CD14-positive monocyte (primary cell): ENCODE measurements at regions of chr6 and their contacts with region 1.

Region 1: GRCh38 chr6:108622641-108623298 is 62.1 kb downstream of the FOXO3 start:
- DNase-seq: peak; percentile 92 to 97 (median 95)
- H3K4me3 ChIP-seq: peak overlapping the region in 2 of 3 experiments; percentile 23 to 50
- H3K4me3 Mint-ChIP-seq: peak overlapping the region; percentile 53 to 85
- H3K27ac ChIP-seq: peak overlapping the region; percentile 74 to 89
- H3K27ac Mint-ChIP-seq: peak overlapping the region; percentile 97 to 100 (median 99)
- H3K4me1 ChIP-seq: peaks cover 42 to 64% of the 10 kb centered on the region in 2 donors
- H3K4me1 Mint-ChIP-seq: peaks cover 71% of the 10 kb centered on the region
- H3K27me3 ChIP-seq: no peaks in the 10 kb centered on the region
- H3K27me3 Mint-ChIP-seq: peaks cover 0 to 4% (median 0%) of the 10 kb centered on the region in 3 donors
- CTCF ChIP-seq: no peak

Region 2: DNA sequence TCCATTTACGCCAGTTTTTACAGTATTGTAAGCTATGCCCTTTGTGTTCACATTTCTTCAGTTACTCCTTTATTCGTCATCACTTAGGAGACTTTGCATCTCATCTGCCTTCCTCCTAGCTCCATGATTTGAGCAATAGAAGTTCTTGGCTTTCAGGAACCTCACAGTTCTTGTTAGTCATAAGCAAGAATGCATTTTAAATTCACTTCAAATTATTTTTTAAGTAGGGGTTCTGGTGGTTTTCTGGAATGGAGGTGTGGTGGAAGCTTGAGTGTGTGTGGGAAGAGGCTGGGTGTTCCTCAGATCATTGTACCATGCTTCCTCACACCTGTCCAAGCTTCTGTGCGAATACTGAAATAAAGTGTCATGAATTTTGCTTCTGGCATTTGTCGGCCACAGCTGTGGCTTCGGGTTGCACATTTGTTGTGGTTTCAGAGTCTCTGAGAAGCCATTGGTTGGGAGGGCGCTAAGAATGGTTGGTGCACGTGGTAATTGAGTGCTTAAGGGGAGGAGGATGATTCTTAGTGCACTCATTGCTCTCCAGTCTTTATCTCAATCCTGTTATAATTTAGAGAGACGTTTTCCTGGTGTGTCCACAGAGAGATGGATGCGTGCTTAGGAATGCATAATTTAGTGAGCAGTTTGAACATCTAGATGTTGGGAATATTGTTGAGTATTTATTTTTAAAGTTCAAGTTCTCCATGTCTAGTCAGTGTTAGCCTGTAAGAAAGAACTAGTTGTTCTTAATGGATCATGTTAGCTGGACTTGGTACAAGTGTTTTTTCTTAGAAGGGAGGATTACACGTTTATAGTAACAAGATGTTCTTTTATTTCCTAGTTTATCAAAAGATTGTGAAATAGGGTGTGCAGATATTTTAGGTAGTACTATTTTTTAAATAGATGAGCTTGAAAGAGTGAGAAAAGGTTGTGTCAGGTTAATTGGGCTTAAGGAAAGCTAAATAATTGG is 30.1 kb before region 1 on chr6:
- intact Hi-C with region 1: loop called in 1 of 2 experiments (anchors 5 kb)
- DNase-seq: peak in 2 of 3 donors; percentile 41 to 68
- H3K4me3 ChIP-seq: no peak overlapping the region
- H3K4me3 Mint-ChIP-seq: peak overlapping the region in 1 of 2 donors; percentile 26
- H3K27ac ChIP-seq: no peak overlapping the region
- H3K27ac Mint-ChIP-seq: peak overlapping the region in 6 of 7 donors; percentile 13 to 82 (median 53)
- H3K4me1 ChIP-seq: peaks cover 64 to 82% of the 10 kb centered on the region in 2 donors
- H3K4me1 Mint-ChIP-seq: peaks cover 86% of the 10 kb centered on the region
- H3K27me3 ChIP-seq: no peaks in the 10 kb centered on the region
- H3K27me3 Mint-ChIP-seq: peaks cover 0 to 2% (median 0%) of the 10 kb centered on the region in 3 donors
- CTCF ChIP-seq: no peak

Region 3: DNA sequence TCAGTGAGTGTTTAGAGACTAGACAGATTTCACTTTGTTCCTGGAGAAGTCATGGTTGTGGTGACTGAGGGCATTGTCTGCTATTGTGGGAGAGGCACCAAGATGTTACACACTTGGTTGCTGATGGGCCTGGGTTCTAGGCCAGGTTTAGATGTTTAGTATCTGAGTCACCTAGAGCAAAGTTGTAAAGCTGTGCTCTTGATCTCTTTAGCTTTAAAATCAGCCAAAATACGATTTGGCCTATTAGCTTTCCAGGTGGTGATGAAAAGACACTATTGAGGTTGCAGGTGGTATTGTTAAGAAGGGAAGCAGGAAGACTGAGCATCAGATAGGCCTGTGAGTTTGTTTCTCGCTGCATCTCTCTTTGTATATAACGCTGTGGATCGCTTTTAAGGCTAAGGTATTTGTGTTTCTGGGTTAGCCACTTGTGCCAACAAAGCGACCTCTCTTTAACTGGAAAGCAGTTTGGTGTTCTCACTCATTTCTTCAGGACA is 13.4 kb before region 1 on chr6:
- intact Hi-C with region 1: no loop called
- DNase-seq: no peak
- H3K4me3 ChIP-seq: no peak overlapping the region
- H3K4me3 Mint-ChIP-seq: no peak overlapping the region
- H3K27ac ChIP-seq: no peak overlapping the region
- H3K27ac Mint-ChIP-seq: no peak overlapping the region
- H3K4me1 ChIP-seq: no peaks in the 10 kb centered on the region
- H3K4me1 Mint-ChIP-seq: peaks cover 24% of the 10 kb centered on the region
- H3K27me3 ChIP-seq: no peaks in the 10 kb centered on the region
- H3K27me3 Mint-ChIP-seq: no peaks in the 10 kb centered on the region
- CTCF ChIP-seq: no peak

Region 4: GRCh38 chr6:108655806-108656651 is 33.3 kb after region 1 on chr6:
- intact Hi-C with region 1: loop called in 1 of 2 experiments (anchors 5 kb)
- DNase-seq: no peak
- H3K4me3 ChIP-seq: no peak overlapping the region
- H3K4me3 Mint-ChIP-seq: no peak overlapping the region
- H3K27ac ChIP-seq: no peak overlapping the region
- H3K27ac Mint-ChIP-seq: no peak overlapping the region
- H3K4me1 ChIP-seq: peaks cover 30 to 34% of the 10 kb centered on the region in 2 donors
- H3K4me1 Mint-ChIP-seq: peaks cover 36% of the 10 kb centered on the region
- H3K27me3 ChIP-seq: no peaks in the 10 kb centered on the region
- H3K27me3 Mint-ChIP-seq: no peaks in the 10 kb centered on the region
- CTCF ChIP-seq: no peak